Activated CD4-positive, alpha-beta T cell treated with anti-CD3 and anti-CD28 coated beads, Interleukin-2, amount 10 ng/mL, durations not matched to agents 24 days and 14 days (primary cell): ENCODE measurements at regions of chr13 and their contacts with region 1.

Region 1: DNA sequence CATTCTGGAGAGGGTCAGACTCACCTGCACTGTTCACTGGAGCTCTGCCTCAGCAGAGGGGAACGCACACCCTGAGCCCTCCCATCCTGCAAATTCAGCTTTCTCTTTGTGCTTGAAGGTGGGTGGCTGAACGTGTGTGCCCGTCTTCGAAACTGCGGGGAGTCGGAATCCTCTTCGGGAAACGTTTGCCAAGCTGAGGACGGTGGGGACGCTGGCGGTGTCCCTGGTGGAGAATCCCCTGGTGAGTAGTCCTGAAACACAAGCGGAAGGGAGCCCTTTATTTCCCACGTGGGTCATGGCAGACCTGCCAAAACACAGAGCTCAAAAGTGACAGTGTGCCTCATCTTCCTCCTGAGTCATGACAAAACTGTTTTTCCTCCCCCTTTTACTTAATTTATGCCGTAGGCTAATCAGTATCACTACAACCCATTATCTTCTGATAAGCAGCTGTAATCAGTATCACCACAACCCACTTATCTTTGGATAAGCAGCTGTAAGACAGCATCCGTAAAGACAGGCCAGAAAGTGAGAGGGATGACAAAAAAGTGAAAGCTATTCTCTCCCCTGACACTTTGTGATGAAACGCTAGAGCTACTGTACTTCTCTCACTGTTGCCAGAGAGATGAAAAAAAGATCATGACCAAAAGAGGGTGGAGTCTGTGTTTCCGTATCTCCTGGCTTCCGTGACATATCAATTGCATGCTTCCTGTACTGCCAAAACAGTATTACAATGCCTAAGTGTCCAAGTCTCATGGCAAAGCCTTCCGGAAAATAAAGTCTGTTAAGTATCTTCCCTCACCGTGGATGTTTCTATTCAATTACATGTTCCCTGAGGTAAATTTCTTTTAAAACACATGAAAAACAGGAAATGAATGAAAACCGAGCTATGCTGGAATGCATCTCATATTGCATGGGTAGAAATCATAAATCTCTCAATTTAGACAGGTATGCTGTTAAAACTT is 155.5 kb downstream of the TBC1D4 start:
- DNase-seq: peak; percentile 87
- H3K4me3 Mint-ChIP-seq: peak overlapping the region; percentile 93
- H3K27ac Mint-ChIP-seq: peak overlapping the region; percentile 98
- H3K4me1 Mint-ChIP-seq: peaks cover 29% of the 10 kb centered on the region
- H3K27me3 Mint-ChIP-seq: no peaks in the 10 kb centered on the region

Region 2: DNA sequence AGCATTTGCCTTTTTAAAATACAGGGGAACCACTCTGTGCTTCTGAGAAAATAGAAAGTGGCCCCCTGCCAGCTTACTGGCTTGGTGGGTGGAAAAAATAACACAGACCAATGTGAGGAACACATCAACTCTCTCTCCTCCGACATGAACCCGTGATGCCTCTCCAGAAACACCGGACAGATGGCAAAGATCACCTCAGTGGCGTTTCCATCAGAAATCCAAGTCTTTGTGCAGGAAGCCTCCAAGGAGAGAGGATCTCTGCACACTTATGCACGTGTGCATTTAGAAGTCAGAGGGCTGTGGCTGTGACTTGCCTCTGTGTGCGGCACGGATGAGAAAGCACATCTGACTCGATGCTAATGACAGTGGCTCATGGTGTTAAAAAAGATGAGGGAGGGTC is 1080.0 kb before region 1 on chr13:
- intact Hi-C with region 1: loop called (anchors 10 kb)
- DNase-seq: no peak
- H3K4me3 Mint-ChIP-seq: no peak overlapping the region
- H3K27ac Mint-ChIP-seq: no peak overlapping the region
- H3K4me1 Mint-ChIP-seq: peaks cover 54% of the 10 kb centered on the region
- H3K27me3 Mint-ChIP-seq: peaks cover 1% of the 10 kb centered on the region

Region 3: DNA sequence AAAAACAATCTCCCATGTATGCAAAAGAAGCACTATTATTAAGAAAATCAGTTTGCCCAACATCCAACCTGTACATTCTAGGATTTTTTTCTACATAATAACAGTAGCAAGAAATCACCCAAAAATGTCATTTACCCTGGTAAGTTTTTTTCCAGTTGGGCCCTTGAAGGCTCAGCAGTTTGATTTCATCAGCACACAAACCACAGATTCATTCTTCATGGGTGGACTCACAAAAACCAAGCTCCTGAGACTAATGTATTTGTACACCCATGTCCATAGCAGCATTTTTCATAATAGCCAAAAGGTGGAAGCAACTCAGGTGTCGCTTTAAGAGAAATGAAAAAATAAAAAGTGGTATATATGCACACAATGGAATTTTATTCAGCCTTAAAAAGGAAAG is 54.6 kb before region 1 on chr13:
- intact Hi-C with region 1: no loop called
- DNase-seq: no peak
- H3K4me3 Mint-ChIP-seq: no peak overlapping the region
- H3K27ac Mint-ChIP-seq: no peak overlapping the region
- H3K4me1 Mint-ChIP-seq: no peaks in the 10 kb centered on the region
- H3K27me3 Mint-ChIP-seq: no peaks in the 10 kb centered on the region

Region 4: GRCh38 chr13:75299913-75300862 is 26.3 kb before region 1 on chr13:
- intact Hi-C with region 1: loop called (anchors 1 kb)
- DNase-seq: no peak
- H3K4me3 Mint-ChIP-seq: peak overlapping the region; percentile 43
- H3K27ac Mint-ChIP-seq: peak overlapping the region; percentile 72
- H3K4me1 Mint-ChIP-seq: peaks cover 20% of the 10 kb centered on the region
- H3K27me3 Mint-ChIP-seq: no peaks in the 10 kb centered on the region

Region 5: GRCh38 chr13:75308222-75308621 is 18.2 kb before region 1 on chr13:
- intact Hi-C with region 1: loop called (anchors 1 kb)
- DNase-seq: no peak
- H3K4me3 Mint-ChIP-seq: peak overlapping the region; percentile 4
- H3K27ac Mint-ChIP-seq: peak overlapping the region; percentile 46
- H3K4me1 Mint-ChIP-seq: peaks cover 47% of the 10 kb centered on the region
- H3K27me3 Mint-ChIP-seq: no peaks in the 10 kb centered on the region

Region 6: DNA sequence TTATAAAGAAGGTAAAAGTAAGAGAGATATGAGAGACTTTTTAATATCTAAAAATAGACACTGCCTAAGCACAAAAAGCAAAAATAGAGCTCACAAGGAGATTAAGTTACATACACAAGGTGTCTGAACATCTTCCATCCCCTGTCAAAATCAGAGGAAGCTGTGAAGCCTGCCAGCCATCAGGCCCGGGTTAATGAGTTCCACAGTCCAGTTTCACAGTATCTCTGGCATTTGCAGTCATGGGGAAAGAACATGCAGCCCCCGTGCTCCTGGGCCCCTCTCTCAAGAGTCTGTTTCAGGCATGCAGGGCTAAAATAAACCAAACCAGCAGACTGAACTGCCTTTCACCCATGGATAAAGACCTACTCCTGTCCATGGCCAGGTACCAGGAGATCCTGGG is 76.3 kb after region 1 on chr13:
- intact Hi-C with region 1: no loop called
- DNase-seq: peak; percentile 43
- H3K4me3 Mint-ChIP-seq: no peak overlapping the region
- H3K27ac Mint-ChIP-seq: no peak overlapping the region
- H3K4me1 Mint-ChIP-seq: no peaks in the 10 kb centered on the region
- H3K27me3 Mint-ChIP-seq: peaks cover 12% of the 10 kb centered on the region

Region 7: GRCh38 chr13:75482070-75482819 is 155.8 kb after region 1 on chr13 and contains the start of gene TBC1D4:
- intact Hi-C with region 1: loop called (anchors 1 kb)
- DNase-seq: peak; percentile 87
- H3K4me3 Mint-ChIP-seq: peak within 1 kb of the TSS; percentile 99
- H3K27ac Mint-ChIP-seq: peak within 1 kb of the TSS; percentile 86
- H3K4me1 Mint-ChIP-seq: peaks cover 36% of the 10 kb centered on the region
- H3K27me3 Mint-ChIP-seq: peaks cover 47% of the 10 kb centered on the region
- total RNA-seq, gene TBC1D4: 72.3 and 77.0 TPM in 2 replicates